H1 (cell line): ENCODE measurements at regions of chr18 and their contacts with region 1.

Region 1: GRCh38 chr18:63578357-63578958 is 8.7 kb upstream of the SERPINB13 start:
- DNase-seq: peak in 1 of 2 experiments; percentile 64
- H3K4me3 ChIP-seq: no peak overlapping the region
- H3K27ac ChIP-seq: no peak overlapping the region
- H3K4me1 ChIP-seq: no peaks in the 10 kb centered on the region
- H3K27me3 ChIP-seq: no peaks in the 10 kb centered on the region
- CTCF ChIP-seq: peak in 2 of 3 experiments; percentile 75 to 77; a peak in 3 of 4 replicates
- EP300 ChIP-seq: no peak
- POLR2A ChIP-seq: no peak
- RAD21 ChIP-seq: peak; percentile 89 to 92

Region 2: DNA sequence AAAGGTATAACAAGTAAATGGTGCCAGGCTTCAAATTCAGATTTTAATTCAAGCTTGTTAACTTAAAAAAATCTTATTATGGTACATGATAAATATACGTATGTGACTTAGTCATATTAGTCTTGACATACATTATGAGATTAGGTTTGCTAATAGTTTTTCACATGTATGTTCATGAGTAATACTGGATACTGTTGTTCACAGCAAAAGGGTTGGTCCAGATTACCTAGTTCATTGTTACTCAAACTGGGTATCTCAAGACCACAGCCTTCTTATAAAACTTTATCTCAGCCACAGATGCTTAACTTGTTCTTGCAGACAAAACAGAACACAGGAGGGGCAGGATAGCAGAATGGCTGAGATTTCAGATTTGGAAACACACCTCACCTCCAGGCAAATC is 183.0 kb before region 1 on chr18:
- CTCF ChIA-PET with region 1: no interaction called
- POLR2A ChIA-PET with region 1: no interaction called
- DNase-seq: no peak
- H3K4me3 ChIP-seq: no peak overlapping the region
- H3K27ac ChIP-seq: no peak overlapping the region
- H3K4me1 ChIP-seq: no peaks in the 10 kb centered on the region
- H3K27me3 ChIP-seq: peaks cover 0 to 1% (median 0%) of the 10 kb centered on the region in 4 experiments; a peak in 1 of 7 replicates
- CTCF ChIP-seq: no peak
- EP300 ChIP-seq: no peak
- POLR2A ChIP-seq: no peak
- RAD21 ChIP-seq: no peak

Region 3: DNA sequence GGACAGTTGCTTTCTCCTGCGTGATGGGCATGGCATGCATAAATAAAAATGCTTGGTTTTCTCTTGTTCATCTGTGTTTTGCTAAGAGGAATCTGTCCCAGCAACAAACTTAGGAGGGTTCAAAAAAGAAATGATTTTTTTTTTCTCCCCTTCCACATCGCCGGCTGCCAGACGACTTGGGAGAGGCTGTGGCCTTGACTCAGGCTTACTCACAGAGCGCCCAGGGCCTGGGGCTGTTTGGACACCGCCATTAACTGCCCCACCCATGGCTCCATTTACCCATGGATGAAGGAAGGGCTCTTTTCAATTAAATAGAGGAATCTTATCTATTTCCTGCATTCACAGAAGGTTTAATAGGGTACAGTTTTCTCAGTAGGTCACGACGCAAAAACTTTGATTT is 124.0 kb before region 1 on chr18:
- CTCF ChIA-PET with region 1: no interaction called
- POLR2A ChIA-PET with region 1: no interaction called
- DNase-seq: no peak
- H3K4me3 ChIP-seq: no peak overlapping the region
- H3K27ac ChIP-seq: no peak overlapping the region
- H3K4me1 ChIP-seq: no peaks in the 10 kb centered on the region; a peak in 1 of 7 replicates
- H3K27me3 ChIP-seq: no peaks in the 10 kb centered on the region
- CTCF ChIP-seq: no peak
- EP300 ChIP-seq: no peak
- POLR2A ChIP-seq: no peak
- RAD21 ChIP-seq: no peak

Region 4: GRCh38 chr18:63487676-63488075 is 90.8 kb before region 1 on chr18:
- CTCF ChIA-PET with region 1: interaction called, 10 read pairs
- POLR2A ChIA-PET with region 1: no interaction called
- DNase-seq: no peak
- H3K4me3 ChIP-seq: no peak overlapping the region
- H3K27ac ChIP-seq: no peak overlapping the region
- H3K4me1 ChIP-seq: no peaks in the 10 kb centered on the region
- H3K27me3 ChIP-seq: no peaks in the 10 kb centered on the region
- CTCF ChIP-seq: no peak
- EP300 ChIP-seq: no peak
- POLR2A ChIP-seq: no peak
- RAD21 ChIP-seq: no peak

Region 5: GRCh38 chr18:63528863-63529492 is 49.5 kb before region 1 on chr18:
- CTCF ChIA-PET with region 1: interaction called, 18 read pairs
- POLR2A ChIA-PET with region 1: no interaction called
- DNase-seq: no peak
- H3K4me3 ChIP-seq: no peak overlapping the region
- H3K27ac ChIP-seq: no peak overlapping the region
- H3K4me1 ChIP-seq: no peaks in the 10 kb centered on the region
- H3K27me3 ChIP-seq: no peaks in the 10 kb centered on the region
- CTCF ChIP-seq: no peak
- EP300 ChIP-seq: no peak
- POLR2A ChIP-seq: no peak
- RAD21 ChIP-seq: no peak

Region 6: GRCh38 chr18:63562284-63562683 is 16.2 kb before region 1 on chr18:
- CTCF ChIA-PET with region 1: interaction called, 107 read pairs
- POLR2A ChIA-PET with region 1: no interaction called
- DNase-seq: no peak
- H3K4me3 ChIP-seq: no peak overlapping the region
- H3K27ac ChIP-seq: no peak overlapping the region
- H3K4me1 ChIP-seq: no peaks in the 10 kb centered on the region
- H3K27me3 ChIP-seq: no peaks in the 10 kb centered on the region
- CTCF ChIP-seq: no peak
- EP300 ChIP-seq: no peak
- POLR2A ChIP-seq: no peak
- RAD21 ChIP-seq: no peak

Region 7: DNA sequence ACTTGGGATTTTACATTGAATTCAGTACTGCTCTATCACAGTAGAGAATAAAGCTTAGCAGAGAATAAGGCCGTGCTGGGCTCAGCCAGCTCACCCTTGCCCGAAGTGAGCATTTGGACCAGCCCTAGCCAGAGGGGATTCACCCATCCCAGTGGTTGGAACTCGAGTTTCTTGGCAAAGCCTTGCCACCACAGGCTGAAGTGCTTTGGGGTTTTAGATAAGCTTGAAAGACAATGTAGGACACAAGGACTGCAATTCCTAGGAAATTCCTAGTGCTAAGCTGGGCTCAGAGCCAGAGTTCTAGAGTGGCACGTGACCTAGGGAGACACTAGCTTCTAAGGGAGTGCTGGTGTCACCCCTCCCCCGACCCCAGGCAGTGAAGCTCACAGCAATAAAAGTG is 152.3 kb after region 1 on chr18:
- CTCF ChIA-PET with region 1: no interaction called
- POLR2A ChIA-PET with region 1: no interaction called
- DNase-seq: no peak
- H3K4me3 ChIP-seq: no peak overlapping the region
- H3K27ac ChIP-seq: no peak overlapping the region
- H3K4me1 ChIP-seq: peaks cover 0 to 4% (median 0%) of the 10 kb centered on the region in 4 experiments; a peak in 1 of 7 replicates
- H3K27me3 ChIP-seq: no peaks in the 10 kb centered on the region
- CTCF ChIP-seq: no peak
- EP300 ChIP-seq: no peak
- POLR2A ChIP-seq: no peak
- RAD21 ChIP-seq: no peak

Region 8: DNA sequence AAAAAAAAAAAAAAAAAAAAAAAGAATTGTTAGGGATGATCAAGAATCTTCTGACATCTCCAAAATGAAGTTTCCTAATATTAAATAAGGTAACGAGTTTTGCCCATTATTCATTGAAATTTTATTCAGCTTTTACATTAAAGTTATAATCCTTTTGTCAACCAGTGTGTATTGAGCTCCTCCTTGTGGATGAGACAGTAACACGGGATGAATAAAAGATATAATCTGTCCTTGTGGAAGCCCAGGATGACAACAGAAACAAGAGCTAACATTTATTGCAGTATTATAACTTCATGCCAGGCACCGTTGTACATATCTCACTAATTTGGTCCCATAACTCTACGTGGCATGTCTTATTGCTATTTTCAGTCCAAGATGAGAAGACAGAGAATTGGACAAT is 163.3 kb after region 1 on chr18:
- CTCF ChIA-PET with region 1: interaction called, 65 read pairs
- POLR2A ChIA-PET with region 1: no interaction called
- DNase-seq: no peak
- H3K4me3 ChIP-seq: no peak overlapping the region
- H3K27ac ChIP-seq: no peak overlapping the region
- H3K4me1 ChIP-seq: no peaks in the 10 kb centered on the region; a peak in 1 of 7 replicates
- H3K27me3 ChIP-seq: no peaks in the 10 kb centered on the region
- CTCF ChIP-seq: peak in 2 of 3 experiments; percentile 28 to 45; a peak in 2 of 4 replicates
- EP300 ChIP-seq: no peak
- POLR2A ChIP-seq: no peak
- RAD21 ChIP-seq: peak; percentile 66

Region 9: GRCh38 chr18:63848159-63848558 is 269.7 kb after region 1 on chr18:
- CTCF ChIA-PET with region 1: interaction called, 16 read pairs
- POLR2A ChIA-PET with region 1: no interaction called
- DNase-seq: no peak
- H3K4me3 ChIP-seq: no peak overlapping the region
- H3K27ac ChIP-seq: no peak overlapping the region
- H3K4me1 ChIP-seq: no peaks in the 10 kb centered on the region
- H3K27me3 ChIP-seq: no peaks in the 10 kb centered on the region
- CTCF ChIP-seq: peak in 2 of 3 experiments; percentile 63 to 70; a peak in 3 of 4 replicates
- EP300 ChIP-seq: no peak
- POLR2A ChIP-seq: no peak
- RAD21 ChIP-seq: peak; percentile 75 to 79